WTC11 (cell line): ENCODE measurements at regions of chr1 and their contacts with region 1.

Region 1: GRCh38 chr1:115706587-115707425 is 61.7 kb downstream of the CASQ2 start:
- DNase-seq: no peak
- ATAC-seq: peak; percentile 88
- H3K4me3 Mint-ChIP-seq: no peak overlapping the region
- H3K27ac Mint-ChIP-seq: no peak overlapping the region
- H3K4me1 Mint-ChIP-seq: no peaks in the 10 kb centered on the region; the same call in 1 of the 2 replicates
- H3K27me3 Mint-ChIP-seq: no peaks in the 10 kb centered on the region
- CTCF ChIP-seq: peak; percentile 75

Region 2: DNA sequence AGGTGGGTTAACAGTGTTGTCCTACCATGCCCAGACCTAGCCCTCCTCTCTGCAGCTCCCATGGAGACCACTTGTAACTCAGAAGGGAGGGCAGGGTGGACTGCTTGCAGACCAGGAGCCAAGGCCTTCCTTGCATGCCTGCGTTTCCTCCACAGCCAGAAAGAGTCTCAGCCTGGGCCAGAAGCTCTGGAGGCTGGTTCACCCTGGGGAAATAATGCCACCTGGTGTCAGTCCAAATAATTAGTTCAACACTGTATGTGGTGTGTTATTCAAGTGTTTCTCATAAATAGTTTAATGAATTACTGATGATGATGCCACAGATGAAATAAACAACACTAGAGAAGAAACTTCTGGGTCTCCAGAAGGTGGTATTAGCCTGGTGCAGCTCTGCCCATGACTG is 81.9 kb before region 1 on chr1:
- CTCF ChIA-PET with region 1: interaction called, 11 read pairs
- POLR2A ChIA-PET with region 1: no interaction called
- DNase-seq: no peak
- ATAC-seq: peak; percentile 62
- H3K4me3 Mint-ChIP-seq: no peak overlapping the region
- H3K27ac Mint-ChIP-seq: no peak overlapping the region
- H3K4me1 Mint-ChIP-seq: peaks cover 1% of the 10 kb centered on the region; the same call in 1 of the 2 replicates
- H3K27me3 Mint-ChIP-seq: no peaks in the 10 kb centered on the region; the same call in 1 of the 2 replicates
- CTCF ChIP-seq: no peak

Region 3: DNA sequence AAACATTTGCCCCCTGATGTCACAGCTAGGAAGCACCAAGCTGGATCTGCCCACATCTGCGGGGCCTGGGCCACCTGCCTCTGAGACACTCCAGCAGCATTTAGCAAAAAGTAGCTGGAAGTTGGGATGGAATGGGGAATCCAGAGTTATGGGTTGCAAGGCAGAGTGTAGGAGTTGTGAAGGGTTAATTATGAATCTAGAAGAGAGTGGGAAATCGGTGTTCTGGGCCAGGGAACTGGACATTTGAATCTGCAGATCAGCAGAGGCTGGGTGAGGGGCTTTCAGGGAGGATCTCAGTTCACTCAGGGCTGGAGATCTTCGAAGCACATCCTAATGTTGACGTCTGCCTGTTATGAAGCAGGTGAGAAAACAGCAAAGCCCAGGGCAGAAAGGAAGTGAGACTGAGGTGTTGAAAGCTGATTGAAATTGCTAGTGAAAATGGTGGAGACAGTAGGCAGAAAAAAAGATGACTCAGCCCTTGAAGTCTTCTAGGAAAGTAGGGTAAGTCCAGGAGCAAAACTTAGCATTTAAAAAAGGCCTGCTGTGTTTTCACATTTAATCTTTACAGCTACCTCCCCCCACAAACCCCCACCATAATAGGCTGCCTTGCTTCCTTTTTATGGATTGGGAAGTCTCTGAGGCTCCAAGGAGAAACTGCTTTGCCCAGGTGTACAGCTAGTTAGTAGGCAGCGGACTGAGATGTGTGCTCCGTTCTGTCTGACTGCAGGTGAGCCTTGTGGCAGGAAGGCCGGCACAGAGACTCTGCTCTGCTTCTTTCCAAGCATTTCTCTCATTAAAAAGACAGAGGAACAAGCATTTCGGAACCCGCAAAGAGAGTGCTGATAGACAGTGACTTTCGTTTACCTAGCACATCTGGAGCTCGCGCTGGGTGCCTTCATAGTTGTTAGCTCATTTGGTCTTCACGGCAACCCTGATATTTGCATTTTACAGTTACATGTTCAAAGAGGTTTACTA is 57.8 kb before region 1 on chr1:
- CTCF ChIA-PET with region 1: interaction called, 19 read pairs
- POLR2A ChIA-PET with region 1: no interaction called
- DNase-seq: no peak
- ATAC-seq: peak; percentile 30; the same call in 1 of the 2 replicates
- H3K4me3 Mint-ChIP-seq: peak overlapping the region; percentile 36; the same call in 1 of the 2 replicates
- H3K27ac Mint-ChIP-seq: peak overlapping the region; percentile 93
- H3K4me1 Mint-ChIP-seq: peaks cover 20% of the 10 kb centered on the region
- H3K27me3 Mint-ChIP-seq: no peaks in the 10 kb centered on the region
- CTCF ChIP-seq: no peak

Region 4: DNA sequence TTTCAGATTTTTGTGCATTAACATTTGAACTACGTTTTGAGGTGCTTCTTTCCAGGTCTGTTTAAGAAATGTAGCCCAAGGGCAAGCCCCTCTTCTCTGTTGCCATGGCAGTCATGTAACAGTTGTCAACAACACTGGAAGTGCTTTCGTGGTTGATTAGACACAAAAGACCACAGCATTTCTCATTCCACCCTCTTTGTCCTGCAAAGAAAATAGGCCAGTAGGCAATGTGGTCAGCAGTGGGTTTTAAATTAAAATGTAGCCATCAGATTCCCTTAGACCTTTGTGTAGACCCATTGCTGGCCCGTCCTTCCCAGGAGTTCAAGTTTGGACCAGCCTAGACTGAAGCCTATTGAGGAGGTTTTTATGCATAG is 29.6 kb before region 1 on chr1:
- CTCF ChIA-PET with region 1: interaction called, 12 read pairs
- POLR2A ChIA-PET with region 1: no interaction called
- DNase-seq: no peak
- ATAC-seq: peak; percentile 33
- H3K4me3 Mint-ChIP-seq: no peak overlapping the region
- H3K27ac Mint-ChIP-seq: 0 out of 2 replicates have a peak overlapping the region, but pooled peaks have one; percentile 69
- H3K4me1 Mint-ChIP-seq: peaks cover 14% of the 10 kb centered on the region
- H3K27me3 Mint-ChIP-seq: no peaks in the 10 kb centered on the region
- CTCF ChIP-seq: no peak

Region 5: DNA sequence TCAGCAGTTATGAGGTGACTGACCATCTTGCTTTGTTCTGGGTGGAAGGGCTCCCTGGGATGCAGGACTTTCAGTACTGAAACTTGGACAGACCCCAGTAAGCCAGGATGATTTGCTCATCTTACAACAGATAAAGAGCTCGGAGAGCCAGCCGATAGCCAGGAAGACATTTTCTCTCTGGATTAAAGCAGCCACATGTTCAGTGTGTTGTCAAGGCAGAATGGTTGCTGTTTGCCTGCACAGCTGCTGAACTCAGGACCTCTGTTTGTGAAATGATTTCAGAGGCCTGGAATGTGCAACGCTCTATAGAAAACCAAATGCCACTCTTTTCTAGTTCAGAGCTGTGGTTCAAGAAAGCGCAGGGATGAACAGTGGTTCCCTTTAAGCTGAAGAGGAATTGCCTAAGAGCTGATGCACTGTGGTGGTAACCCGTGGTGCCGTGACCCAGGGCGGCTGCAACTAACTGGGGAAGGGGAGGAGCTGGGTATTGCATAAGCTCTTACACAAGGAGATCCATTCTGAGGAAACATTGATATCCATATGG is 21.0 kb after region 1 on chr1:
- CTCF ChIA-PET with region 1: interaction called, 18 read pairs
- POLR2A ChIA-PET with region 1: no interaction called
- DNase-seq: no peak
- ATAC-seq: peak; percentile 38
- H3K4me3 Mint-ChIP-seq: no peak overlapping the region
- H3K27ac Mint-ChIP-seq: no peak overlapping the region
- H3K4me1 Mint-ChIP-seq: no peaks in the 10 kb centered on the region
- H3K27me3 Mint-ChIP-seq: no peaks in the 10 kb centered on the region
- CTCF ChIP-seq: no peak

Region 6: DNA sequence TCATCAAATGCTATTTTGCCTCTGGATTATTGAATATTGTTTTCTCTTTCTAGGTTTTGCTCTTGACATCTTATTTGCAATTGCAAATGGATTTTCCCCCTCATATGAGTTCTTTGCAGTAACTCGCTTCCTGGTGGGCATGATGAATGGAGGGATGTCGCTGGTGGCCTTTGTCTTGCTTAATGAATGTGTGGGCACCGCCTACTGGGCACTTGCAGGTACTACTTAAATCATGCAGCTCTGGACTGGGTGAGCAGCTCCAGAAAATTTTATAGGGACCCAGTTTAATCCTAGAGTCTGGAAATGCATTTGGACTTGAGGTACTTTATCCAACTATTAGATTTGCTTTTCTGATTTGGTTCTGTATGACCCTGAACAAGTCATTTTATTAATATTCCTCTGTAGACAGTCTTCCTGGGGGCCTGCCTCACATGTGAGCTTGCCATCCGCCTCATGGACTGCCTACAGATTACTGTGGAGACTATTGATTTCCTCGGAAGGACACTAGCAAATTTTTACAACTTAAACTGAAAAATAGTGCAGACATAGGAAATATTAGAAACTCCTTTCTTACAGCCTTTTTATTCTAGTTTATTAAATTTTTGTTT is 314.0 kb after region 1 on chr1:
- CTCF ChIA-PET with region 1: interaction called, 14 read pairs
- POLR2A ChIA-PET with region 1: no interaction called
- DNase-seq: peak; percentile 78
- ATAC-seq: peak; percentile 97
- H3K4me3 Mint-ChIP-seq: no peak overlapping the region
- H3K27ac Mint-ChIP-seq: no peak overlapping the region
- H3K4me1 Mint-ChIP-seq: peaks cover 4% of the 10 kb centered on the region; the same call in 1 of the 2 replicates
- H3K27me3 Mint-ChIP-seq: no peaks in the 10 kb centered on the region
- CTCF ChIP-seq: peak; percentile 79

Region 7: DNA sequence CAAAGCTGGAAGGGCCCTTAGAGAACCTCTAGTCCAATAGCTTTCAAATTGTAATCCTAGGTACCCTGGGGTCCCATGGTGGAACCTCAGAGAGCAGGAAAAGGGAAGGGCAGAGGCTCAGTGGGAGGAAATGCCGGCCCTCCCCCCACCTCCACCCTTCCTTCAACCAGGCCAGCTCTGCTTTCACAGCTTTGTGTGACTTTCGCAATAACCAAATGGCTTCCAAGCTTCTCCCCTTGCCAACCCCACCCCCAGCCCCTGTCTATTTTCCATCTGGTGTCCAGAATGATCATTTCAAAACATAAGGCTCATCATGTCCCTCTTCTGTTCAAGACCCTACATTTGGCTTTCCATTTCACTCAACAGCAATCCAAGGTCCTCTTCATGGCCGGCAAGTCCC is 789.6 kb after region 1 on chr1:
- CTCF ChIA-PET with region 1: no interaction called
- POLR2A ChIA-PET with region 1: no interaction called
- DNase-seq: no peak
- ATAC-seq: no peak
- H3K4me3 Mint-ChIP-seq: no peak overlapping the region
- H3K27ac Mint-ChIP-seq: no peak overlapping the region
- H3K4me1 Mint-ChIP-seq: peaks cover 19% of the 10 kb centered on the region
- H3K27me3 Mint-ChIP-seq: no peaks in the 10 kb centered on the region
- CTCF ChIP-seq: no peak